GM10248 (cell line): ENCODE measurements at regions of chr16 and their contacts with region 1.

Region 1: GRCh38 chr16:50210266-50211038 is 55.9 kb upstream of the ADCY7 start:
- DNase-seq: peak; percentile 70
- CTCF ChIP-seq: peak; percentile 79

Region 2: DNA sequence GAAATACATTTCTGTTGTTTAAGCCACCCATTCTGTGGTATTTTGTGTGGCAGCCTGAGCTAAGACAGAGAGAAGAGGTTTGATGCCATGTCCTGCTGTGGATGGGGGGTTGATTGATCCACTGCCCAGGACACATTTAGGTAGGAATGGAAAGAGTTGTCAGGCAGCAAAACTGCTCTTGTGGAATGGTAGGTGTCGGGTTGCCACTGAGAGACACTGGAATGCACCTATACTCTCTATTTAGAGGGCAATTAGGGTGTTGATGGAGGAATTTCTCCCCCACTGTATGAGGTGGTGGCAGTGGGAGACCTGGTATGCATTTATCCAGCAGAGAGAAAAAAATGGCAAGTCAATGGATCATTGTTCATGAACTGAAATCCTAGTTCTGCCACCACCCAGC is 959.8 kb before region 1 on chr16:
- CTCF ChIA-PET with region 1: no interaction called
- POLR2A ChIA-PET with region 1: no interaction called
- DNase-seq: no peak
- CTCF ChIP-seq: no peak

Region 3: DNA sequence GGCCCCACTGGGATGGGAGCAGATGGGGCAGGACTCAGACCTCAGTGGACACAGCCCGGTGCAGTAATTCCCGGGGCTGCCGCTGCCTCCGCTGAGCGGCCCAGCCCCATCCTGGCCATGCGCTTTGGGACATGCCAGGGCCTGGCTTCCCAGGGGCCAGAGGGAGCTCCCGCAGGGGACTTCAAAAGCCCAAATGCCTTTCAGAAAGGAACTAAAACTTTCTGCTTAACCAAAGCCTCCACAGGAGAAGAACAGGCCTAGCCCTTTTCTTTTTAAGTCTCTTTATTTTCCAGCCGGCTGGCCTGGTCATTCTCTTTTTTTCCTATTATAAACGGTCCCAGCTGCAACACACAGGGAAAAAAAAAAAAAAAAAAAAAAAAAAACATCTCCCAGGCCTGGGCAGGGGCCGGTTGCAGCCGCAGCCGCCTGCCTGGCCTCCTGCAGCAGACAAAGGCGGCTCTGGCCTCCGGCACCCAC is 343.8 kb before region 1 on chr16:
- CTCF ChIA-PET with region 1: no interaction called
- POLR2A ChIA-PET with region 1: no interaction called
- DNase-seq: no peak
- CTCF ChIP-seq: no peak

Region 4: GRCh38 chr16:49951574-49952195 is 258.8 kb before region 1 on chr16:
- CTCF ChIA-PET with region 1: no interaction called
- POLR2A ChIA-PET with region 1: no interaction called
- DNase-seq: no peak
- CTCF ChIP-seq: no peak

Region 5: GRCh38 chr16:50038756-50039529 is 171.5 kb before region 1 on chr16:
- CTCF ChIA-PET with region 1: interaction called, 37 read pairs
- POLR2A ChIA-PET with region 1: no interaction called
- DNase-seq: no peak
- CTCF ChIP-seq: no peak

Region 6: GRCh38 chr16:50071075-50071671 is 139.3 kb before region 1 on chr16:
- CTCF ChIA-PET with region 1: interaction called, 186 read pairs
- POLR2A ChIA-PET with region 1: no interaction called
- DNase-seq: no peak
- CTCF ChIP-seq: no peak

Region 7: GRCh38 chr16:50121721-50122445 is 88.6 kb before region 1 on chr16:
- CTCF ChIA-PET with region 1: interaction called, 11 read pairs
- POLR2A ChIA-PET with region 1: no interaction called
- DNase-seq: peak; percentile 41
- CTCF ChIP-seq: no peak

Region 8: GRCh38 chr16:50160495-50161164 is 49.8 kb before region 1 on chr16:
- CTCF ChIA-PET with region 1: interaction called, 14 read pairs
- POLR2A ChIA-PET with region 1: no interaction called
- DNase-seq: no peak
- CTCF ChIP-seq: no peak

Region 9: DNA sequence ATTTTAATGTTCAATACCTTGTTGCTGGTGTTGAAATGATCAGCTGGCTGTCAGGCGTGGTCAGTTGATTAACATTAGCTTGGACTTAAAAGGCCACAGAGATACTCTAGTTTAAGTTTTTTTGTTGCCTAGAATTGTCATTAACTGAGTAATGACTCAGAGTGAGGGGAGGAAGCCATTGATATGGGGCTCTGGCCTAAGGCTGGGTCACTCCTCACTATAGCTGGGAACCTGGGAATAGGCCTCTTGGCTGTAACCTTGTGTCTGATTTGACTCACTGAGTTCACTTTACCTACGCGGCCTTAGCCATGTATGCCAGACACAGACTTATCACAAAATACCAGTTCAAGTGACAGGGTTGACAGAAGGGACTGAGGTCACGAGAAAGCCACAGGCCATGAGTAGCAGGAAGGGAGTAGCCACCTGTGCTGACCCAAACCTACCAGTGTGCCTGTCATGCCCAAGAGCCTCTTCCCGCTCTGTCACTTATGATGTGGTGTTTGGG is 18.0 kb after region 1 on chr16:
- CTCF ChIA-PET with region 1: interaction called, 12 read pairs
- POLR2A ChIA-PET with region 1: no interaction called
- DNase-seq: no peak
- CTCF ChIP-seq: no peak

Region 10: GRCh38 chr16:50354629-50355456 is 144.4 kb after region 1 on chr16:
- CTCF ChIA-PET with region 1: interaction called, 79 read pairs
- POLR2A ChIA-PET with region 1: no interaction called
- DNase-seq: no peak
- CTCF ChIP-seq: peak; percentile 40